BJ (cell line): ENCODE measurements at regions of chr14 and their contacts with region 1.

Region 1: GRCh38 chr14:50542941-50543418 is 10.6 kb upstream of the MAP4K5 start:
- DNase-seq: no peak
- H3K4me3 ChIP-seq: no peak overlapping the region
- H3K27me3 ChIP-seq: peaks cover 2% of the 10 kb centered on the region
- CTCF ChIP-seq: peak; percentile 54

Region 2: DNA sequence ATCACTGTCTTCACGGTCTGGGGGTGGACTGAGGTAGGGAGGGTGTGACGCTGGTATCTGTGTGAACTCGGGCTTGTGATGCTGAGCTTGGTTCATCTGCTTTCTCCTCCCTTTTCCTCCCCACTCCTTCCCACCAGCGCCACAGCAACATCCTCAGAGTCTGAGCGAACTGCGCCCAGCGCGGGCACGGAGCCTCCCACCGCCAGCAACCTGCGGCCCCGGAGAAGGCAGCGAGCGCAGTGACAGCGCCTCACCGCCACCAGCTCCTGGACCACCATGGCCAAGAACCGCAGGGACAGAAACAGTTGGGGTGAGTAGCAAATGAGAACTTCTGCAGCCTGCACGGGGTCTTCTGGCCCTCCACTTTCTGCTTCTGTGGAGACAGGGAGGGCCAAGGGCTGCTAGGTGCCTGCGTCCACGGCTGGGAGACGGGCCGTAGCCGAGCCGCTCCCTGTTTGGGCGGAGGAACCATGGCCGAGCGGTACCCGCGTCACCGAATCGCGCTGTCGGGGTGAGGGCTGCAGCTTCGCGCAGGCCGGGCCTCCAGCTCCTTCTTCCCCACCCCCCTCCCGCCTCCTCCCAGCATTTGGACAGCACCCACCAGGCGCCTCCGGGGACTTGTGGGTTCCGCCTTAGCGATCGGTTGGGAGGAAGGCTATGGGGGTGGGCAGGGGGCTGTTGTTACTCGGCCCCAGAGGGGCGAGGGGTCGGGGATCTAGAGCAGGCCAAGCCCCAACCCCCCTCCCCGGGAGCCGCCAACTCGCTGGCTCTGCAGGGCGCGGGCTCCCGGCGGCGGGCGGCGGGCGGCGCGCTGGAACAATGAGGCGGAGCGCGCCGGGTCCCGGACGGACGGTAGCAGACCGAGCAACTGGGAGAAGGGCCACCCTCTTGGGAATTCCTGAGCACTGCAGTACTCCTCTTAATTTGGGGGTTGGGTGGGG is 17.3 kb after region 1 on chr14 and contains the start of gene ATL1:
- CTCF ChIA-PET with region 1: interaction called, 11 read pairs
- POLR2A ChIA-PET with region 1: no interaction called
- DNase-seq: no peak
- H3K4me3 ChIP-seq: peak within 1 kb of the TSS; percentile 78
- H3K27me3 ChIP-seq: no peaks in the 10 kb centered on the region; the same call in 1 of the 2 replicates
- CTCF ChIP-seq: no peak
- polyA plus RNA-seq, gene ATL1: 4.5 and 5.5 TPM in 2 replicates

Region 3: DNA sequence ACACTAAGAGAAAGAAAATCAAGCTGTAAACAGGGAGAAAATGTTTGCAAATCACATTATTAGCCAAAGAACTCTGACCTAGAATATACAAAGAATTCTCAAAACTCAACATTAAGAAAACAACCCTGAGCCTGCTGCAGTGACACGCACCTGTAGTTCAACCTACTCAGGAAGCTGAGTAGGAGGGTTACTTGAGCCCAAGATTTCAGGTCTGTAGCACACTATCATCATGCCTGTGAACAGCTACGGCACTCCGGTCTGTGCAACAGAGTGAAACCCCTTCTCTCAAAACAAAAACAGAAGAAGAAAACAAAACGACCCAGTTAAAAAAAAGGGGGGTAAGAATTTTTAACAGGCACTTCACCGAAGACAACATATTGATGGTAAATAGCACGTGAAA is 104.3 kb after region 1 on chr14:
- CTCF ChIA-PET with region 1: no interaction called
- POLR2A ChIA-PET with region 1: no interaction called
- DNase-seq: no peak
- H3K4me3 ChIP-seq: no peak overlapping the region
- H3K27me3 ChIP-seq: no peaks in the 10 kb centered on the region
- CTCF ChIP-seq: no peak